PC-3 (cell line): ENCODE measurements at regions of chr12 and their contacts with region 1.

Region 1: DNA sequence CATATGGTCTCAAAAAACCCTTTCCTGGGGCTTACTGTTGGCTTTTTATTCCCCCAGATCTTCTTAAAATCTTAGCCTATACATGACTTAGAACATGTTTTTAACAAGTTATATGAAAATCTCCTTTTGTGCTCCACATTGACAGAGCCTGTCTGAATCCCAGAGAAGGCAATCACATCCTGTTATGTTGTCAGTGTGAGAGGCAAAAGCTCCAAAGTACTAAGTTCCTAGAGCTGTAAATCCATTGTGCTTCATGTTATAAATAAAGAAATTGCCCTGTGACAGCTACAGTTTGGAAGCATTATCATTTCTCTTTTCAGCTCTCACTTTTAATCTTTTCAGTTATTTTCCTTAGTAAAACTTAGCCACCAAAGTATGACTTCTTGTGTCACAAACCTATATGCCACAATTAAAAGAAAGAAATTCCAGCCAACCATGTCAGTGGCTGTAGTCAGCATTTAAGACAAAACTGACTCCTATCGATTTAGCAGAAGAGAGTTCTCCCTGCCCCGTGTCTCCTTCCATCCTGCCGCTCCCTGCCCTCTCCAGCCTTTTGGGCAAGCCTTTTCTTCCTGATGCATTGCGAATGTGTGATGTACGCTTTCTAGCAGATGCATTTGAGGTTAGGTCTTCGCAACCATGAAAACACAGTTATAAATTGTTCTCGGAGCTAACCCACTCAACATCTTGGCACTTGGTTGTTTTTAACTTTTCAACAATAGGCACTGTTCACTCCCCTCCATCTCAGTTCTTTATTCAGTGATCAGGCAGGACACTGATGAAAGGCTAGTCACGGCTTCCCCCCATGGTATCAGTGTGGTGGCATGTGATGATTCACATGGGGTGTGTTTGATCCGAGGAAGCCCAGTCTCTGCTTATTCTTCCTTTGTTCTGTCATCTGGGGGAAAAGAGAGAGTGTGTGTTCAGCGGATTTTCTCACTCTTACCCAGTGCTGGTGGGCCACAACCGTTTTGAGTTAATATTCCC is 143.5 kb downstream of the SSPN start:
- DNase-seq: peak; percentile 80
- ATAC-seq: peak; percentile 97
- H3K4me3 ChIP-seq: no peak overlapping the region
- H3K27ac ChIP-seq: no peak overlapping the region
- H3K4me1 ChIP-seq: peaks cover 21% of the 10 kb centered on the region
- H3K27me3 ChIP-seq: no peaks in the 10 kb centered on the region
- CTCF ChIP-seq: no peak

Region 2: GRCh38 chr12:26323673-26324072 is 15.2 kb before region 1 on chr12:
- CTCF ChIA-PET with region 1: no interaction called
- POLR2A ChIA-PET with region 1: no interaction called
- intact Hi-C with region 1: loop called (anchors 2 kb)
- DNase-seq: no peak
- ATAC-seq: no peak
- H3K4me3 ChIP-seq: no peak overlapping the region
- H3K27ac ChIP-seq: no peak overlapping the region
- H3K4me1 ChIP-seq: peaks cover 22% of the 10 kb centered on the region
- H3K27me3 ChIP-seq: no peaks in the 10 kb centered on the region
- CTCF ChIP-seq: no peak

Region 3: GRCh38 chr12:26369588-26369987 is 30.7 kb after region 1 on chr12:
- CTCF ChIA-PET with region 1: no interaction called
- POLR2A ChIA-PET with region 1: no interaction called
- intact Hi-C with region 1: no loop called
- DNase-seq: peak; percentile 84
- ATAC-seq: peak; percentile 100
- H3K4me3 ChIP-seq: no peak overlapping the region
- H3K27ac ChIP-seq: no peak overlapping the region
- H3K4me1 ChIP-seq: peaks cover 12% of the 10 kb centered on the region
- H3K27me3 ChIP-seq: no peaks in the 10 kb centered on the region
- CTCF ChIP-seq: no peak